Activated CD8-positive, alpha-beta T cell treated with anti-CD3 and anti-CD28 coated beads for 36 hours (primary cell): ENCODE measurements at regions of chr3 and their contacts with region 1.

Region 1: DNA sequence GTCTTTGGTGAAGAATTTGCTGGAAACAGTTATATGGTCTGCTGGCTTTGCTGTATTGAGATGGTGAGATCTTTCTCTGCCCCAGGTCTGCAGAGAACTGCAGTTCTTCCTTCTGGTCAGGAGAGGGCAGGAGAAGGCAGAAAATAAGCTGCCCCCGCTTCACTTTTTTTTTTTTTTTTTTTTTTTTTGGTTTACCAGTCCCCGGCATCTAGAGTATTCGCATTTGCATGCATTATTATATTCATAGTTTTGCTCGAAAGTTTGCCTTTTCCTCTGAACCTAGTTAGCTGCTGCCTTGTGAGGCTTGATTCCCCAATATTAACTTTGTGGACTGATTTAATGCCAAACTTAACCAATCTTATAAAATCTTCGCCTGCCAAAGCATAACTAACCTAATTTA is 10.6 kb upstream of the PARL start:
- DNase-seq: peak; percentile 37
- ATAC-seq: peak; percentile 94
- H3K4me3 Mint-ChIP-seq: no peak overlapping the region
- H3K27ac Mint-ChIP-seq: no peak overlapping the region
- H3K4me1 Mint-ChIP-seq: no peaks in the 10 kb centered on the region
- H3K27me3 Mint-ChIP-seq: peaks cover 6% of the 10 kb centered on the region
- CTCF ChIP-seq: peak; percentile 80

Region 2: DNA sequence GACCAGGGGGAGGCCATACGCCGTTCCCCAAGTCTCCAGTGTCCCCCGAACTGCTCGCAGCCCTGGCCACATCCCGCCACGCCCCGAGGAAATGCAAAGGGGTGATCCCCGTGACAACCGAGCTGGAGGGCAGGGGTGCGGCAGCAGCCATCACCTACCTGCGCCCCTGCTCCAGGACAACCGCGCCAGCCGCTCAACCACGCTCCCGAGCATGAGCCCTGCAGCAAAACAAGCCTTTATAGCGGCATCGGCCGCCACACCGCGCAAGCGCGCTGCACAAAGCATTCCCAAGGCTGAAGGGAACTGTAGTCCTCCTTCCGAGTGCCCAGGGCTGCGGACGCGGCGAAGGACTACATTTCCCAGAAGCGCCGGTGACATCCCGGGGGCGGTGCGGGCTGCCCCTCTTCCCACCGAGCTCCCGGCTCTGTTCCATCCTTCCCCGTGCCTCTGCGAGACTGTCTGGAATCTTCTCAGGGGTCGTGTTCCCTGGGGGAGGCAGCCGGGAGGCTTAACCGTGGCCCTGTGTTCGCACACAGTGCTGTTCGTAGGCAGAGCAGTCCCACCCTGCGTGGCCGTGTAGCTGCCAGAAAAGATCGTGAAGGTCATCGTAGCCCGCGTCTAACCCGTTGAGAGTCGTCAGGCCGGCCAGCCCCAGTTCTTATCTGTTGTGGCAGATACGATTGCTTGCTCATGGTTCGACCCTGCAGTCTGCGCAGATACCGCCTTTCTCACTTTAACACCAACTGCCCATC is 122.6 kb after region 1 on chr3 and contains the start of gene ABCC5:
- CTCF ChIA-PET with region 1: interaction called, 11 read pairs
- POLR2A ChIA-PET with region 1: no interaction called
- intact Hi-C with region 1: loop called (anchors 5 kb)
- DNase-seq: peak; percentile 89
- ATAC-seq: peak; percentile 97
- H3K4me3 Mint-ChIP-seq: peak within 1 kb of the TSS; percentile 94
- H3K27ac Mint-ChIP-seq: peak within 1 kb of the TSS; percentile 82
- H3K4me1 Mint-ChIP-seq: peaks cover 22% of the 10 kb centered on the region
- H3K27me3 Mint-ChIP-seq: peaks cover 10% of the 10 kb centered on the region
- CTCF ChIP-seq: peak; percentile 85
- total RNA-seq, gene ABCC5: 16.2 to 17.7 TPM

Region 3: DNA sequence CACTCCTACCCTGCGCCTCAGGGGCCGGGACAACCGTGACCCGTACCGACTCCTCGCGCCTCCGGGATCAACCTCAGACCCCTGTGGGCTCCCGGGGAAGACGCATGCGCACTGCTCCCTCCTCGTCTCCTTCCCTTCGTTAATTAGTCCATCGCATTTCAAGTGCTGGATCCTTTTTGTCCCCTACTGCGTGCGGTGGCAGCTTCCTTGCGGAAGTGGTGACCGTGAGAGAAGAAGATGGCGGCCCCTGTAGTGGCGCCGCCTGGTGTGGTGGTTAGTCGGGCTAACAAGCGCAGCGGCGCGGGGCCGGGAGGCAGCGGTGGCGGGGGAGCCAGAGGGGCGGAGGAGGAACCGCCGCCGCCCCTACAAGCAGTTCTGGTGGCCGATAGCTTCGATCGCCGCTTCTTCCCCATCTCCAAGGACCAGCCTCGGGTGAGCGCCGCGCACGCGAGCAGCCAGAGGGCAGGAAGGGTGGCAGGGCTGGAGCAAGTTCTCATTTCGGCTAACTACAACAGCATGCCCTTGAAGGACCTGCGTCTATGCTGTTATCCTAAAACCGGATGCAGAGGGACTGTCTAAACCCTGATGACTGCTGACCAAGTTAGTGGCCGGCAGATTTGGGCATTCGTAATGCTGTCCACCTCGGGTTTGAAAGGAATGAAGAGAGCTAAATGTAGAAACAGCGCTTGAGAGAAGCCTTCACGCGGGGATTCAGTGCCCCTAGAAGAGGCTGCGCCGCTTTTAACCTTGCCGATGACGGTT is 240.0 kb after region 1 on chr3 and contains the start of gene EIF2B5:
- CTCF ChIA-PET with region 1: interaction called, 5 read pairs
- POLR2A ChIA-PET with region 1: no interaction called
- intact Hi-C with region 1: loop called (anchors 10 kb)
- DNase-seq: peak; percentile 92
- ATAC-seq: peak; percentile 87
- H3K4me3 Mint-ChIP-seq: peak within 1 kb of the TSS; percentile 88
- H3K27ac Mint-ChIP-seq: peak within 1 kb of the TSS; percentile 91
- H3K4me1 Mint-ChIP-seq: peaks cover 28% of the 10 kb centered on the region
- H3K27me3 Mint-ChIP-seq: no peaks in the 10 kb centered on the region
- CTCF ChIP-seq: no peak
- total RNA-seq, gene EIF2B5: 59.9 to 64.0 TPM

Region 4: DNA sequence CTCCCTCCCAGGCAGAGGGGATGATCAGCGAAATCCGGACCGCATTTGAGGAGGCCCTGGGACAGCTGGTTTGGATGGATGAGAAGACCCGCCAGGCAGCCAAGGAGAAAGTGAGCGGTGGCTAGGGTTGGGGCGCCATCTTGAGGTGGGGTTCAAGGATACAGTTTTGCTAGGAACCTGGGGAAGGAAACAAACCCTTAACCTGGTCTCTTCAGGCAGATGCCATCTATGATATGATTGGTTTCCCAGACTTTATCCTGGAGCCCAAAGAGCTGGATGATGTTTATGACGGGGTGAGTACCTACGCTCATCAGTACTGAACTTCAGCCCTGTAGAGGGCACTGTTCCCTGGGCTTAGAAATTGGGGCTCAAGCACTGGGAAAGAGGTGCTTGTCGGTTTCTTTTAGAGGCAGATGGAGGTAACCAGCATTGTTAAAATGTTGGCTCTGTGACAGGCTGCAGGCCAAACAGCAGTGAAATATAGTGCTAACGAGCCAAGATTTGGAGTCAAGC is 394.2 kb after region 1 on chr3:
- CTCF ChIA-PET with region 1: interaction called, 15 read pairs
- POLR2A ChIA-PET with region 1: no interaction called
- intact Hi-C with region 1: loop called (anchors 10 kb)
- DNase-seq: peak; percentile 80
- ATAC-seq: peak; percentile 85
- H3K4me3 Mint-ChIP-seq: no peak overlapping the region
- H3K27ac Mint-ChIP-seq: no peak overlapping the region
- H3K4me1 Mint-ChIP-seq: no peaks in the 10 kb centered on the region
- H3K27me3 Mint-ChIP-seq: peaks cover 8% of the 10 kb centered on the region
- CTCF ChIP-seq: peak; percentile 78